Breast epithelium (tissue), 4 donors: ENCODE measurements at regions of chr1 and their contacts with region 1.

Region 1: DNA sequence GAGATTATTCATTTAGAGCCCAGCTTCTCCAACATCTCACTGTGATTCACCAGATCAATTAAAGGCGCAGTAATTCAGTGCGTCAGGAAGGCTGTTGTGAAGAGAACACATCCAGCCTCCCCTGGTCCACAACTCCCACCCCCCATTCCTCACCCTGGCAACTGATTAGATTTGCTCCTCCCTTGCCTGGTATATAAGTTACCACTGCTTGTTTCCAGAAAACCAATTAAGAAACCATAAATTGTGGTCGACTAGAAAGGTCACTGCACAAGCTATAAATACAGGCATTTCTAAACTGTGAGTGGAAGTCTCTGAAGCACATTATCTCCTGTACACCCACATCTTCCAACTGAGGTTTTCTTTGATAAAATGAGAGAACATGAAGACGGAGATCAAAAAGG is 41.9 kb downstream of the FAM163A start:
- DNase-seq: no peak
- H3K4me3 ChIP-seq: no peak overlapping the region
- H3K27ac ChIP-seq: no peak overlapping the region
- H3K4me1 ChIP-seq: no peaks in the 10 kb centered on the region
- H3K27me3 ChIP-seq: no peaks in the 10 kb centered on the region
- CTCF ChIP-seq: no peak
- POLR2A ChIP-seq: no peak

Region 2: GRCh38 chr1:178739285-178740045 is 1045.6 kb before region 1 on chr1:
- intact Hi-C with region 1: no loop called
- DNase-seq: no peak
- H3K4me3 ChIP-seq: no peak overlapping the region
- H3K27ac ChIP-seq: no peak overlapping the region
- H3K4me1 ChIP-seq: no peaks in the 10 kb centered on the region
- H3K27me3 ChIP-seq: no peaks in the 10 kb centered on the region
- CTCF ChIP-seq: no peak
- POLR2A ChIP-seq: no peak

Region 3: DNA sequence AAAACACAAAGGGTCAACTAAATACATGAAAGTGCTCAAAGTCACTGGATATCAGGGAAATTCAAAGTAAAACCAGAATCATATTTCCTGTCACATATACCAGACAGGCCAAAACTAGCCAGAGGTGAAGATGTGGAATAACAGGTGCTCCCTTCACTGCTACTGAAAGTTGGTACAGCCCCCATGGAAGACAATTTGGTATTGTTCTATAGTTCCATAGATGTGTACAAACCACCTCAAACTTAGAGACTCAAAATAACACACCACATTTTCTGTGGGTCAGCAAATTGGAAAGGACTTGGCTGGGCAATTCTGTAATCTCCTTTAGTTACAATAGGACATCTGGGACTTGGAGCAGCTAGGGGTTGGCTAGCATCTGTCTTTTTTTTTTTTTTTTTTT is 516.0 kb before region 1 on chr1:
- intact Hi-C with region 1: loop called (anchors 5 kb)
- DNase-seq: no peak
- H3K4me3 ChIP-seq: no peak overlapping the region
- H3K27ac ChIP-seq: no peak overlapping the region
- H3K4me1 ChIP-seq: no peaks in the 10 kb centered on the region
- H3K27me3 ChIP-seq: no peaks in the 10 kb centered on the region
- CTCF ChIP-seq: no peak
- POLR2A ChIP-seq: no peak

Region 4: DNA sequence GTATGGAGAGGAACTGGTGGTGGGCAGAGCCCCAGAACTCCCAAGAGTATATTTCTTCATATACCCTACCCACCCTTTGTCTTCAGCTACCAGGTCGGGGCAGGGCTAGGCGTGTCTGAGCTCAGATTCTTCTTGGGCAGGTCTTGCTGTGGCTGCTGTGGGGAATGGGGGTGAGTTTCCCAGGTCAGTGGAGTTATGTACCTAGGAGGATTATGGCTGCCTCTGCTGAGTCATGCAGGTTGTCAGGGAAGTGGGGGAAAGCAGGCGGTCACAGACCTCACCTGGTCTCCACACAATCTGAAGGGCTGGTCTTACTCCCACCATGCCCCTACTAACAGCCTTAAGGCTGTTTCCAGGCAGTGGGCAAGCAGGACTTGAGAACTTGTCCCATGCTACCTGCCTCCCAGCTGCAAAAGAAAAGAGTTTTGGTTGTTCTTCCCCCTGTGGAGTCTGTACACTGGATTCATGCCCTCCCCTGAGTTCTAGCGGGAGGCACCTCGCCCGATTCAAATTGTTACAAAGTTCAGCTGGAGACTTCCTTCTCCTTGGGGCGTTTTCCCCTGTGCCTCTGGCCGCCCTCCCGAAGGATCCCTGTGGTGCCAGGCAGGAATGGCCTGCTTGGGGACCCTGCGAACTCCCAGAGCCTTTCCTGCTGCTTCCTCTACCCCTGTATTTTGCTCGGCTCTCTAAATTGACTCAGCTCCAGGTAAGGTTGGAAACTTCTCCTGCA is 267.9 kb before region 1 on chr1:
- intact Hi-C with region 1: no loop called
- DNase-seq: no peak
- H3K4me3 ChIP-seq: no peak overlapping the region
- H3K27ac ChIP-seq: no peak overlapping the region
- H3K4me1 ChIP-seq: no peaks in the 10 kb centered on the region
- H3K27me3 ChIP-seq: no peaks in the 10 kb centered on the region
- CTCF ChIP-seq: no peak
- POLR2A ChIP-seq: no peak

Region 5: GRCh38 chr1:179803104-179803503 is 18.1 kb after region 1 on chr1:
- intact Hi-C with region 1: no loop called
- DNase-seq: no peak
- H3K4me3 ChIP-seq: no peak overlapping the region
- H3K27ac ChIP-seq: no peak overlapping the region
- H3K4me1 ChIP-seq: no peaks in the 10 kb centered on the region
- H3K27me3 ChIP-seq: no peaks in the 10 kb centered on the region
- CTCF ChIP-seq: no peak
- POLR2A ChIP-seq: no peak

Region 6: DNA sequence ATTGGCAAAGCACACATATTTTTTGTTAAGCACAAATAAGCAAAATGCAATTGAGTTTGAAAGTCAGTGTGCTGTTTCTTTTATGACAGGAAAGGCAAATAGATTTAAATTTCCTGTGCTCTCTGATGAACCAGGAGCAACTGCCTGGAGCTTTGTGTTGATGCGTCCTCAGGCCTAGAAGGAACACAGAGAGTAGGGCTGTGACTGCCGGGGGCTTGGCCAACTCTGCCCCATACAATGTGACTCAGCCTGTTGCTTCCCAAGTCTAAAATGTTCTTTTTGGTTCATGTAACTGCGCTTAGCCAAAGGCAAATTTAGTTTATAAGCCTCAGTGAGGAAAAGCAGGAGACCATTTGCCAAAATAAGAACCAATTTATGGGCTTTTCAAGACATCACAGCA is 55.1 kb after region 1 on chr1:
- intact Hi-C with region 1: no loop called
- DNase-seq: no peak
- H3K4me3 ChIP-seq: no peak overlapping the region
- H3K27ac ChIP-seq: no peak overlapping the region
- H3K4me1 ChIP-seq: no peaks in the 10 kb centered on the region
- H3K27me3 ChIP-seq: no peaks in the 10 kb centered on the region
- CTCF ChIP-seq: no peak
- POLR2A ChIP-seq: no peak